Calu3 (cell line): ENCODE measurements at regions of chr1 and their contacts with region 1.

Region 1: DNA sequence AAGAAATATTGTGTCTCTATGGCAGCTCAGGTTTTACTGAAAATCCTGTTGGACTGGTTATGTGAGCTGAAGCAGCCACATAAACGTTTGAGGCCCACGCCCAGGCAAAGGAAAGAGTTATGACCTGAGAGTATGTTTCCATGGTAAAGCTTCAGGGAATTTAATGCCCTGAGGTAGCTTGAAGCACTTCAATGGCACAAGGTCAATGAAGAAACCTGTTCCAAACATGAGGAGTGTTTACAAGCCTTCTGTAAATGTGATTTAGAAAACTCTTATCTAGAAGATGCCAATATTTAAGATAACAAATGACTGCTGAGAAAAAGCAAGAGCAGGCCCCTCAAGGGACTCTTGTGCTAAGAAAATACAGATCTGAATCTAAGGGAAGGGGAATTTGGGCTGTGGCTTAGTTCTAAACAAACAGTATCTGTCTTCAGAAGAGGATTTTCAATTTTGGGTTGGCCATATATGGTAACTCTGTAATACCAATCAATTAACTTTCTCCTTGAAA is 384.2 kb downstream of the SEC16B start:
- DNase-seq: peak; percentile 67
- H3K4me3 Mint-ChIP-seq: no peak overlapping the region
- H3K27ac Mint-ChIP-seq: peak overlapping the region; percentile 32
- H3K4me1 Mint-ChIP-seq: peaks cover 27% of the 10 kb centered on the region
- H3K27me3 Mint-ChIP-seq: no peaks in the 10 kb centered on the region
- CTCF ChIP-seq: no peak

Region 2: GRCh38 chr1:177256153-177257075 is 329.3 kb before region 1 on chr1:
- CTCF ChIA-PET with region 1: no interaction called
- intact Hi-C with region 1: loop called (anchors 10 kb)
- DNase-seq: peak; percentile 92
- H3K4me3 Mint-ChIP-seq: peak overlapping the region; percentile 28
- H3K27ac Mint-ChIP-seq: peak overlapping the region; percentile 45
- H3K4me1 Mint-ChIP-seq: peaks cover 34% of the 10 kb centered on the region
- H3K27me3 Mint-ChIP-seq: no peaks in the 10 kb centered on the region
- CTCF ChIP-seq: peak; percentile 92

Region 3: GRCh38 chr1:177547200-177547599 is 38.5 kb before region 1 on chr1:
- CTCF ChIA-PET with region 1: no interaction called
- intact Hi-C with region 1: no loop called
- DNase-seq: no peak
- H3K4me3 Mint-ChIP-seq: no peak overlapping the region
- H3K27ac Mint-ChIP-seq: no peak overlapping the region
- H3K4me1 Mint-ChIP-seq: no peaks in the 10 kb centered on the region
- H3K27me3 Mint-ChIP-seq: no peaks in the 10 kb centered on the region
- CTCF ChIP-seq: no peak

Region 4: GRCh38 chr1:177928194-177928593 is 342.5 kb after region 1 on chr1:
- CTCF ChIA-PET with region 1: no interaction called
- intact Hi-C with region 1: loop called (anchors 5 kb)
- DNase-seq: no peak
- H3K4me3 Mint-ChIP-seq: no peak overlapping the region
- H3K27ac Mint-ChIP-seq: no peak overlapping the region
- H3K4me1 Mint-ChIP-seq: peaks cover 20% of the 10 kb centered on the region
- H3K27me3 Mint-ChIP-seq: no peaks in the 10 kb centered on the region
- CTCF ChIP-seq: no peak